Activated naive CD4-positive, alpha-beta T cell treated with anti-CD3 and anti-CD28 coated beads for 36 hours (primary cell): ENCODE measurements at regions of chr17 and their contacts with region 1.

Region 1: DNA sequence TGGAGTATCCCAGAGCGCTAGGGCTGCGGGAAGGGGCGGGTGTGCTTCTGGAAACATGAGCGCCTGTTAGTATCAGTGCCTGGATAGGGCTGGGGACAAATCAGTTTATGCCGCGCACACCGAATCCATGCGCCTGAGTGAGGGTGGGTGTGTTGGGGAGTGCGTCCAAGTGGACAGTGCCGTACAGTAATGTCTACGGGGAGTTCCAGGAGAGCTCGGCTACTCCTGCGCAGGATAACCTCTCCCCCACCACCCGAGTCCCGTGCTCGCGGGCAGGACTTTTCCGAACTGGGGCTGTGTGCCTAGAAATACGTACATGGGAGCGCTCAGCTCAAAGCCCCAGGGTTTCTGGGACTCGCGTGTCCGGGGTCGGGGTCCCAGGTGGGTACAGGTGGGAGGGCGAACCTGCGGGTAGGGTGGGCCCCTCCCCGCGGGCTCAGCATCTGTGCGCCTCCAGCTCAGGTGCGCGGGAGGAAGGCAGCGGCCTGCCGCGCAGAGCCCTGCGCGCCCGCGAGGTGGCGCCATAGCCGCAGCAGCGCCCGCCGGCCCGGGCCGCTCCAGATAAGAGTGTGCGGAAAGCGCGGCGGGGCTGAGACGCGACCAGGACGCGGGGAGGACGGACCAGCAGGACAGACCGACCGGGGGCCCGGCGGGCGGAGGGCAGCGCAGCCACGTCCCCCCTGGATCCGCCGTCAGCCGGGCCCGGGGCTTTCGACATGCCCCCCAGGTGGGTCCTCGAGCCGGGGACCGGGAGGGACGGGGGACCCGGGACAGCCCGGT is at the start of gene HIC1:
- DNase-seq: peak; percentile 79
- H3K4me3 Mint-ChIP-seq: peak within 1 kb of the TSS; percentile 73
- H3K27ac Mint-ChIP-seq: peak within 1 kb of the TSS; percentile 36
- H3K4me1 Mint-ChIP-seq: peaks cover 10% of the 10 kb centered on the region
- H3K27me3 Mint-ChIP-seq: peaks cover 15% of the 10 kb centered on the region
- total RNA-seq, gene HIC1: 14.8 TPM

Region 2: DNA sequence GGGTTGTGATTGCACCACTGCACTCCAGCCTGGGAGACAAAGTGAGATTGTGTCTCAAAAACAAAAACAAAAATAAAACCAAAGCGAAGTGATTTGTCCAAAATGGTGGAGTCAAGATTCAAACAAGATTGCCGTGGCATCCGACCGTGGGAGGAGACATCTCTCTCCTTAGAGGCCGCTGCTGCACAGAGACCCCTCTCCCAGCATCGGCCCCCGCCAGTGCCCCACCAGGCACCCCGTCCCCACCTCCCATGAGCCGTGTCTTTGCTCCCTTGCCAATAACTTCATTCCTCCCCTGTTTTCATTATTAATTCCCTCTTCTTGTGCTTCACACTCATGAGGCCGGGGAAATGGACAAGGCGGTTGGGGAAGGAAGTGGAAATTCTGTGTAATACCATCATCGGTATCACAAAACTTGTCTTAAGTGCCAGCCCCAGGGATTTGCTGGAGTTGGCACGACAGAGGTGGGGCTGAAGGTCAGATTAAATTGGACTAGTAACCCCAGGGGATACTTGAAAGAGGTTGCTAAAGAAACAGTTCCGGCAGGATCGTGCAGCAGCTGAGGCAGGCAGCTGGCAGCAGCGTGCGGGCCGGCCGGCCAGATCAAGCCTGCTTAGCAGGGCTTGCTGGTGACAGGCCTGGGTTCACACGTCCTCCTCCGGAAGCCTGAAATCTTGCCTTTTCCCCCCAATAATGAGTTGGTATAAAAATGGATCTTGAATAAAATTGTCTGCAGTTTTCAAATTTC is 96.4 kb before region 1 on chr17:
- CTCF ChIA-PET with region 1: no interaction called
- intact Hi-C with region 1: no loop called
- DNase-seq: no peak
- H3K4me3 Mint-ChIP-seq: no peak overlapping the region
- H3K27ac Mint-ChIP-seq: no peak overlapping the region
- H3K4me1 Mint-ChIP-seq: no peaks in the 10 kb centered on the region
- H3K27me3 Mint-ChIP-seq: no peaks in the 10 kb centered on the region

Region 3: DNA sequence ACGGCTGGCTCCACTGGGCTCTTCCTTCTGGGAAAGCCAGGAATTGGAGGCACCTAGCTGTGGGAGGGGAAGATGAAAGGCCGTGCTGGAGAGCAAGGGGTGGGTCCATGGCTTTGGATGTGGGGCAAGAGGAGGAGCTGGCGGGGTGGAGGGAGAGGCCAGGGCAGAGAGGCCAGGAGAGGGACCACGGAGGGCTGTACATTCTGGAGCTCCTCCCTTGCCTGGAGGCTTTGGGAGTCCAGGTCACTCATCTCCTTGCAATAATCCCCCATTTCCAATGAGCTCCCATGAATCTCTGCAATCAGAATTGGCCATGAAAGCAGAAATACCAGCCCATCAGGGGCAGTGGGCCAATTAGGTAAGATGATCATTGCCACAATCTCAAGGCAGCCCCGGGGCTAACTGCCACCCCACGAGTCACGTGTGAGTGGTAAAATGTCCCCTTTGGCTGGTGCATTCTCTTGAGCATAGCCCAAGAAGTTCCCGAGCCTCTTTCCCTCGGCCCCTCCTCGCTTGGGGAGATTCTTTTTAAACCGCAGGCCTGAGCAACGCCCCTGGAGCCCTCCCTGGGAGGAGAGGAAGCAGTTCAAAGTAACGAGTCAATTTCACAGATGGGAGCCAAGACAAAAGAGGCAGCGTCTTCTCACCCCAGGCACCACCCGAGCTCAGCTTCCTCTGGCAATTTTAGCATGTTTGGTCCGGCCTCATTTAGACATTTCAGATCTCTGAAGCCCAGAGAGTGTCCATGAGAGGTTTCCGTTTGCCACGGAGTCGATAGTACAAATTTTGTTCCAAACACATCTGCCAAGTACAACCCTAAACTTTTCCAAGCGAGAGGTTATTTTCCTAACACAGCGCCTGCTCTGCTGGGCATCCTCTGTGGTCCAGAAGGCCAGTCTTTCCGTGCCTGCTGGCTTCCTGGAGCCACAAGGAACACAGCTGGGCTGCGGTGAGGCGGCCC is 43.0 kb before region 1 on chr17:
- CTCF ChIA-PET with region 1: no interaction called
- intact Hi-C with region 1: no loop called
- DNase-seq: no peak
- H3K4me3 Mint-ChIP-seq: no peak overlapping the region
- H3K27ac Mint-ChIP-seq: no peak overlapping the region
- H3K4me1 Mint-ChIP-seq: no peaks in the 10 kb centered on the region
- H3K27me3 Mint-ChIP-seq: peaks cover 7% of the 10 kb centered on the region

Region 4: GRCh38 chr17:2090804-2091534 is 36.3 kb after region 1 on chr17:
- CTCF ChIA-PET with region 1: interaction called, 18 read pairs
- intact Hi-C with region 1: no loop called
- DNase-seq: no peak
- H3K4me3 Mint-ChIP-seq: no peak overlapping the region
- H3K27ac Mint-ChIP-seq: peak overlapping the region; percentile 57
- H3K4me1 Mint-ChIP-seq: peaks cover 55% of the 10 kb centered on the region
- H3K27me3 Mint-ChIP-seq: no peaks in the 10 kb centered on the region

Region 5: DNA sequence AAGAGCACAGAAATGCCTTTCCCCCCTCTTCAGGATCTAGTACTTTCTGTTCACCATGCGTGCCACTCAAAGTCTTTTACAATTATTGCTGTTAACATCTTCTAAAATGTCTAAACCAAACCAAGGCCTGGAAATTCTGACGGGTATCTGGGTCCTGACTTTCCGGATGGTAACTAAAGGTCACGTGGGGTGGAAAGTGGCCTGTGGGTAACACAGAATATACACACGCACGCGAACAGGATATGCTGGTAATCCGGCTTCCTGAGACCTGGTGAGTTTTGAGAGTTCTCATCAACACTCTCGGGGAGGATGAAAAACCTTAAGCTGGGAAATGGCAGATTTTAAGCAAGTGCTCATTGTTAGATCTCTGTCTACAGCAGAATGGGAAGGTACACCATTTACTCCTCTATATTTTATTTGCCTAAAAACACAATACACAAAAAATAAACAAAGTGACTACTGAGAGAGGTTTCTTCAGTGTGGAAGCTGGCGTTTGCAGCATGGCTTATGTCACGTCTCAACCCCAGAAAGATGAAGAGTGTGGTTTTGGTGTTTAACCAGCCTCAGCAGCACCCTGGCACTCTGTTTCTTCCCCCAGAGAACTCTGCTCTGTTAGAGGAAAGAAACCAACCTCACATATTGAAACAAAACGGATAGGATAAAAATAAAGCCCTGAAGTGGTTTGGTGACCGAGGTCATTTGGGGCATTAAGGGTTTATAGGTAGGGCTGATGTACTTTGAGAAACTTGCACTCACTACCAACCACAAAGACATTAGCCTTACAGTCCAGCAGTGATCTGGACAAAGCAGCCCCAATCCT is 211.6 kb after region 1 on chr17:
- CTCF ChIA-PET with region 1: interaction called, 16 read pairs
- intact Hi-C with region 1: no loop called
- DNase-seq: peak; percentile 94
- H3K4me3 Mint-ChIP-seq: peak overlapping the region; percentile 76
- H3K27ac Mint-ChIP-seq: peak overlapping the region; percentile 100
- H3K4me1 Mint-ChIP-seq: peaks cover 88% of the 10 kb centered on the region
- H3K27me3 Mint-ChIP-seq: no peaks in the 10 kb centered on the region

Region 6: DNA sequence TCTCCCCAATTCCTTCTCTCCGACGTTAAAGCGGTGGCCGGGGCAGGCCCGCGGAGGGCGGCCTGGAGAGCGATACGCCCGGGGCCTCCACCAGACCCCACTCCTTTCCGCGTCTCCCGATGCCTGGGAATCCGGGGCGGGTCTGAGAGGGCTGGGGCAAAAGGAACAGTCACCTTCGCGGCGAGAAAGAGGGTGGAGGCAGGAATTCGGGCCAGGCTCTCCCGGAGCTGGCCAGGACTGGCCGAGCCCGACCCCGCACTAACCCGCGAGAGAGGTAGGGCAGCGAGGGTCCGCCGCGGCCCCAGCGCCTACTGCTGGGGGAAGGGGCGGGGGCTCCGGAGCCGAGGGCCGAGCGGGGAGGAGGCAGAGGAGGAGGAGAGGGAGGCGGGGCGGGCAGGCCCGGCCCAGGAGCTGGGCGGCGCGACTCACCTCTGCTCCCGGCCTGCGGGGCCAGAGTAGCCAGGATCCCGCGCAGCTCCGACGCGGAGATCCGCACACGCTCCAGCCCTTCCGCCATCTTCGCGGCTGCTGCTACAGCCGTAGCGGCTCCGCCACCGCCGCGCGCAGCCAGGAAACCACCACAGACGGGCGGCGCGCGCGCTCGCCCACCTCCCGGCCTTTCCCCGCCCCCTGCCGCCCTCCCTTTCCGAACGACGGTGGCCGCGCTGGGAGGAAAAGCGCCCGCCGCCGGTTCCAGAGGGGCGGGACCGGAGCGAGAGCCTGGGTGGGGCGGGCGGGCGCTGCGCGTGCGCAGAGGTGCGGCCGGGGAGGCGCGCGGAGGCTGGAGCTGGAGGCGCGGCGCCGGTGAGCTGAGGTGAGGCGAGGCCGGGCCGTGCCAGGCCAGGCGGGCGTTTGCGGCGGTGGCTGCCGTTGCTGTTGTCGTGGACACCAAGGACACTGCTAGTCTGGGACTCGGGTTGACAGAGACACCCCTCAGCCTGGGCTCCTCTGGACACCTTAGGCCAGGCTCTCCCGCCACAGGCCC is 248.8 kb after region 1 on chr17 and contains the starts of genes SMG6 and SRR:
- CTCF ChIA-PET with region 1: interaction called, 3 read pairs
- intact Hi-C with region 1: loop called (anchors 5 kb)
- DNase-seq: peak; percentile 95
- H3K4me3 Mint-ChIP-seq: peak within 1 kb of the TSS; percentile 91
- H3K27ac Mint-ChIP-seq: peak within 1 kb of the TSS; percentile 70
- H3K4me1 Mint-ChIP-seq: peaks cover 45% of the 10 kb centered on the region
- H3K27me3 Mint-ChIP-seq: no peaks in the 10 kb centered on the region
- total RNA-seq, gene SMG6: 18.8 to 20.7 TPM
- total RNA-seq, gene SRR: 8.9 to 10.2 TPM

Region 7: DNA sequence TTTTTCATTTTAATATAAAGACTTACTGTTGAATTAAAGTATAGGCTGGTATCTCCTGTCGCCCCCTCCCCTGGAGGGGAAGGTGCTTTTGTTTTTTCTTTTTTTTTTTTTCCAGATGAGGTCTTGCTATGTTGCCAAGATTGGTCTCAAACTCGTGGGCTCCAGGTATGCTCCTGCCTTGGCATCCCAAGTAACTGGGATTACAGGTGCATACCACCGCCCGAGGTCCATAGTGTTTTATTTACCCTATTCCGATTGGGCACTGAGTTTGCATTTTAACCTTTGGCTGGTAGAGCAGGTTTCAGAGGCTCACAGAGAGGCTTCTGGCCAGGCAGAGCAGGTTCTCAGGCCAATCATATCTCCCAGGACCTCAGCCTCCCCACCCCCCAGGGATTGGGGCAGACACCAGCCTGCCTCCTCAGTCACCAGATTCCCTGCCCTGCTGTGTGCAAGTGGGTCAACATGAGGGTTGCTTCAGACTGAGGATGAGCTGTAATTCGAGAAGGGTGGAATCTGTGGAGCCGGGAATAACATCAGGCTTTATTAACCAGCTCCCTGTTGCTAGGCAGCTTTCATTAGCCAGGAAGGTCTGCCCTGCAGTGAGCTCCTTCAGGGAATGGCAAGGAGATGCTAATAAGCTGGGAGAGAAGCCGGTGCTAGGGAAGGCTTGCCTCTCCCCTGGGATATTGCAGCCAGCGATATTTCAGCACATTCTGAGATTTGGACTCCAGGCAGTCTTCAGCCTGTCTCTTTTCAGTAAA is 293.0 kb after region 1 on chr17:
- CTCF ChIA-PET with region 1: interaction called, 15 read pairs
- intact Hi-C with region 1: no loop called
- DNase-seq: no peak
- H3K4me3 Mint-ChIP-seq: no peak overlapping the region
- H3K27ac Mint-ChIP-seq: no peak overlapping the region
- H3K4me1 Mint-ChIP-seq: peaks cover 6% of the 10 kb centered on the region
- H3K27me3 Mint-ChIP-seq: no peaks in the 10 kb centered on the region

Region 8: DNA sequence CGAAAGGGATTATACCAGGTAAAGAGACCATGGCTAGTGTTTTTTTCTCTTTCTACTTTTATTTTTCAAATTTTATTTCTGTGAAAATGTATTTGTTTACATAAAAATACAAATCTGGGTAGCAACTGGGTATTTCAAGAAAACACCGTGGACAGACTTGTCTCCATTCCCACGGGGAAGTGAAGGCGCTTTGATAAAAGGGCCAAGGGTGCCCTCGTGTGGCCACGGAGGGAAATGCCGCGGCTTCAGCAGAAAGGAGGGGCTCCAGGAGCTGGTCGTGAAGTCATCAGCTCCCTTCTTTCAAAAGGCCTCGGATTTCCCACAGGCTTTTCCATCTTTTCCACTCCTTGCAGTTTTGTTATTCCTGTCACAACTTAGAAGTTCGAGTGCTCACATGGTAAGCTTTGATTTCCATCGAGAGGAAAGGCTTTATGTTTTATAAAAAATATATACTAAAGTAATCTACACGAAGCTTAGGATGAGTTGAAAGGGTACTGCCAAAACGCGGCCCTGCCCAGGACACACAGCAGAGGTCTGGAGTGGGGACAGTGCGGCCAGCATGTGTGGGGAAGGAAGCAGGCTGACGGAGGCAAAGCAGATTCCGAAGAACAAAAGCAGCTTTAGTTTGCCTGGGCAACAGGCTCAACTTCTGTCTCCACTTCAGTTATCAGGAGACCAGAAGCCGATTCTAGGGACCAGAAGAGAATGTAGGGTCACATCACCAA is 361.5 kb after region 1 on chr17:
- CTCF ChIA-PET with region 1: no interaction called
- intact Hi-C with region 1: loop called (anchors 1 kb)
- DNase-seq: peak; percentile 90
- H3K4me3 Mint-ChIP-seq: no peak overlapping the region
- H3K27ac Mint-ChIP-seq: peak overlapping the region; percentile 10
- H3K4me1 Mint-ChIP-seq: no peaks in the 10 kb centered on the region
- H3K27me3 Mint-ChIP-seq: no peaks in the 10 kb centered on the region